ENCODE measurements at regions of chr22 and their contacts with region 1.

Region 1: GRCh38 chr22:26416670-26417250 is 12.3 kb upstream of the ASPHD2 start:
- DNase-seq: peak; percentile 41
- H3K4me3 ChIP-seq: peak overlapping the region in 2 of 3 experiments; percentile 12 to 50
- H3K27ac ChIP-seq: peak overlapping the region; percentile 23
- H3K4me1 ChIP-seq: peaks cover 18% of the 10 kb centered on the region
- H3K27me3 ChIP-seq: no peaks in the 10 kb centered on the region
- CTCF ChIP-seq: no peak

Region 2: DNA sequence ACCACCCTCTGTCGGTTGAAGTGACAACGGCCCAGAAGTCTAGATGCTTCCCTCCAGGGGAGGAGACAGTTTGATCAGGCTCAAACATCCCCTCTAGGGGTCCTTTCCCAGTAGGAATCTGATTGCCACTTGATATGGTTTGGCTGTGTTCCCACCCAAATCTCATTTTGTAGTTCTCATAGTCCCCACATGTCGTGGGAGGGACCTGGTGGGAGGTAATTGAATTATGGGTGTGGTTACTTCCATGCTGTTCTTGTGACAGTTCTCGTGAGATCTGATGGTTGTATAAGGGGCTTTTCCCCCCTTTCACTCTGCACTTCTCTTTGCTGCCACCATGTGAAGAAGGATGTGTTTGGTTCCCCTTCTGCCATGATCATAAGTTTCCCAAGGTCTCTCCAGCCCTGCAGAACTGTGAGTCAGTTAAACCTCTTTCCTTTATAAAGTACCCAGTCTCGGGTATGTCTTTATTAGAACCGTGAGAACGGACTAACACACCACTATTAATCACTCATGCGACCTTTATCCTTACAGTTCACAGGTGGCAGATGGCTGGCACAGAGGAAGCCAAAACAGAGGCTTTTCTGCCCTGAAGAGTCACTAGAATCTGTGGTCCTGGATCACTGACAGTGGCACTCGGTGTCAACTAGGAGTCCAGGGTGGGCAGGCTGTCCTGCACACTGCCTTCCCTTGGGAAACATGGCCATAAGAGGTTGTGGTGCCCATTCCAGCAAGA is 33.9 kb after region 1 on chr22:
- dilution Hi-C with region 1: loop called (anchors 5 kb)
- DNase-seq: no peak
- H3K4me3 ChIP-seq: no peak overlapping the region
- H3K27ac ChIP-seq: no peak overlapping the region
- H3K4me1 ChIP-seq: peaks cover 5% of the 10 kb centered on the region
- H3K27me3 ChIP-seq: no peaks in the 10 kb centered on the region
- CTCF ChIP-seq: no peak